IMR-90 (cell line): ENCODE measurements at regions of chr4 and their contacts with region 1.

Region 1: DNA sequence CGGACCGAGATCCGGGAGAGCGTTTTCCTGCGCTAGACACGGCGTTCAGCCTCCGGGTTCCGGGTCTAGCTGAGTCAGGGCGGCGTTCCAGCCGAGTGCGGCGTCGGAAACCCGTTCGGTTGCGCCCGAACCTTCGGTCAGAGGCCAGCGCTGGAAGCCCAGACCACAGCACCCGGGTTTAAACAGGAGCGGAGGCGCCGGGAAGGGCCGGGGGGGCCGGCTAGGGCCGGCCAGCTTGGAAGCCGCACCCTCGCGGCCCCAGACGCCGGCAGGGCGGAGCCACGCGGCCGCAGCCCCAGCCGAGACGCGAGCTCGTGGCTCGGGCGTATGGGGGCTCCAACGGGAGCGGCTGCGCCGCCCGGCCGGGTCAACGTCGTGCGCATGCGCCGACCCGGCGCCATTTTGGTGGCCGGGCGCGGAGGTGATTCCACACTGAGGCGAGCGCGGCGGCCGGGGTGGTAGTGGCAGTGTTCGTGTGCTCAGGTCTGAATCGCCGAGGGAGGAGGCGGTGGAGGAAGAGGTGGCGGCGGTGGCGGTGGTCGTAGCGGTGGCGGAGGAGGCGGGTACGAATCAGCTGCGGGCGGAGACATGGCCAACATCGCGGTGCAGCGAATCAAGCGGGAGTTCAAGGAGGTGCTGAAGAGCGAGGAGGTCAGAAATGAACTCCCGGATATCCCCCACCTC is at the start of gene UBE2K:
- DNase-seq: peak; percentile 82
- ATAC-seq: peak; percentile 98
- H3K4me3 ChIP-seq: peak within 1 kb of the TSS; percentile 90
- H3K27ac ChIP-seq: peak within 1 kb of the TSS; percentile 97
- H3K4me1 ChIP-seq: peaks cover 5% of the 10 kb centered on the region
- H3K27me3 ChIP-seq: no peaks in the 10 kb centered on the region
- CTCF ChIP-seq: no peak
- POLR2A ChIP-seq: peak; percentile 67; the same call in 1 of the 2 replicates
- RAD21 ChIP-seq: no peak
- total RNA-seq, gene UBE2K: 17.7 and 24.4 TPM in 2 replicates

Region 2: DNA sequence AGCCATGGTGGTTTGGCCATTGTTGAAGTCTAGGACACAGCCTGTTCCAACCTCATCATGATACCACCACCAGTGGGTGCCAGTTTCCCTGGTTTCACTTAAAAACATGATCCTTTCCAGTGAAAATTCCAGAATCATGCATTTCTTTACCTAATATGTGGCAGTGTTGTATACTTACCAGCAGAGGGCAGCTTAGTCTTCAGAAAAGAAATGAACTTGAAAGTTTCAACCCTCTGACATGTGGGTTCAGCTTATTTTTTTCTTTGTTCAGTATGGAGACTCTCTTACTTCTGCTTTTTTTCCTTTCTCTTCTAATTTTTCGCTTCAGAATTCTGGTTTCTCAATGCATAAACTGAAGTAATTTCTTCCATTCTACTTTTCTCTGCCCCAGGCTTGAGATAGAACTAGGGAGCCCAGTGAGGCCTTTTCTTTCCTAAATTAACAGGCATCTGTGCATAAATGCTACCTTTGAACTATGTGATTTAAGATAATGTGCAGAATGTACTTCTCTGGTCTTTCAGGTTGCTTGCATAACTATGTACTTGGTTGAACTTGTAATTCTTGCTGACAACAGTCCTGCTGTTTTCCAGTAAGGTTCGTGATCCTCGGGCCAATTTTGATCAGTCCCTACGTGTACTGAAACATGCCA is 228.3 kb before region 1 on chr4:
- CTCF ChIA-PET with region 1: no interaction called
- POLR2A ChIA-PET with region 1: no interaction called
- dilution Hi-C with region 1: no loop called
- in situ Hi-C with region 1: no loop called
- intact Hi-C with region 1: loop called (anchors 2 kb)
- DNase-seq: peak; percentile 87
- ATAC-seq: peak; percentile 83
- H3K4me3 ChIP-seq: no peak overlapping the region
- H3K27ac ChIP-seq: no peak overlapping the region
- H3K4me1 ChIP-seq: no peaks in the 10 kb centered on the region
- H3K27me3 ChIP-seq: no peaks in the 10 kb centered on the region
- CTCF ChIP-seq: peak; percentile 97
- POLR2A ChIP-seq: no peak
- RAD21 ChIP-seq: peak; percentile 87

Region 3: GRCh38 chr4:39638354-39639240 is 59.3 kb before region 1 on chr4 and contains the start of gene SMIM14:
- CTCF ChIA-PET with region 1: no interaction called
- POLR2A ChIA-PET with region 1: interaction called, 7 read pairs
- dilution Hi-C with region 1: no loop called
- in situ Hi-C with region 1: no loop called
- intact Hi-C with region 1: loop called (anchors 1 kb)
- DNase-seq: peak; percentile 98
- ATAC-seq: peak; percentile 96
- H3K4me3 ChIP-seq: peak within 1 kb of the TSS; percentile 87
- H3K27ac ChIP-seq: peak within 1 kb of the TSS; percentile 88
- H3K4me1 ChIP-seq: no peaks in the 10 kb centered on the region; the same call in 1 of the 2 replicates
- H3K27me3 ChIP-seq: no peaks in the 10 kb centered on the region
- CTCF ChIP-seq: no peak
- POLR2A ChIP-seq: peak; percentile 98
- RAD21 ChIP-seq: peak; percentile 26; the same call in 1 of the 2 replicates
- total RNA-seq, gene SMIM14: 15.6 and 30.8 TPM in 2 replicates

Region 4: DNA sequence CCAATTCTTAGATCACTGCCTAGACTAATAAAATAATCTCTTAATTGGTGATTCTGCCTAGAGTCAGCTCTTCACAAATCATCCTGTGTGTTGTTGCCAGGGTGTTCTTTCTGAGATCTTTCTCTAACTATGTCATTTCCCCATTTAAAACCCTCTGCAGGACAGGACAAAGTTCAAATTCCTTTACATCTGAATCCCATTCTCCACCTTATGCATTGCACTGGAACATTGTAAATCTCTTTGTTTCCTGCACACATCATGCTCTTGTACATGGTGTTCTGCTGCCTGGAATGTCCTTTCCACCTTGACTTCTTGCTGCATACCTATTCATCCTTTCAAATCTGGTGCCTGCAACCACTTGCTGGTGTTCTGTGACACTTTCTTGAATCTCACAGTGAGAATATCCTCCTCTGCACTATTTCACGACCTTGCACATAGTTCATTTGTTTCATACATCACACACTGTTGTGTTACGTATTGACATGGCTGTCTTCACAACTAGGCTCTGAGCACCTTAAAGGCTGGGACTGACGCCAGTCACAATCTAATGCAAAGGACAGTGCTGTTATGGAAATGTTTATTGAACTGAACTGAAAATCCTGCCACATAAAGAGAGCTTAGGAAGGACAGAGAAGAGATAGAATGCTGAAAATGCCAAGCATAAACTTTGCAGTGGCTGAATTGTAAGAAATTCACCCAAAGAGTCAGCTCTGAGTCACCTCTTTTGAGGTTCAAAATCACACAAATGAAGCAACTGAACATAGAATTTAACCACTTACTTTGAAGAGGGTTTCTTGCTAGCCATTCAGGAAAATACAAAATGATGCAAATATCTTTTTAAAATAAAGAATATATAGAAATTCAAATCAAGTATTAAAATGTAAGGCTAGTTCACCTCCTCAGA is 32.8 kb before region 1 on chr4:
- CTCF ChIA-PET with region 1: no interaction called
- POLR2A ChIA-PET with region 1: no interaction called
- dilution Hi-C with region 1: no loop called
- in situ Hi-C with region 1: no loop called
- intact Hi-C with region 1: no loop called
- DNase-seq: peak; percentile 75
- ATAC-seq: peak; percentile 93
- H3K4me3 ChIP-seq: no peak overlapping the region
- H3K27ac ChIP-seq: peak overlapping the region; percentile 46; the same call in 1 of the 2 replicates
- H3K4me1 ChIP-seq: peaks cover 4% of the 10 kb centered on the region
- H3K27me3 ChIP-seq: no peaks in the 10 kb centered on the region
- CTCF ChIP-seq: no peak
- POLR2A ChIP-seq: no peak
- RAD21 ChIP-seq: no peak

Region 5: GRCh38 chr4:39950861-39951481 is 253.1 kb after region 1 on chr4:
- CTCF ChIA-PET with region 1: no interaction called
- POLR2A ChIA-PET with region 1: interaction called, 13 read pairs
- dilution Hi-C with region 1: no loop called
- in situ Hi-C with region 1: no loop called
- intact Hi-C with region 1: no loop called
- DNase-seq: peak; percentile 19
- ATAC-seq: peak; percentile 69
- H3K4me3 ChIP-seq: no peak overlapping the region
- H3K27ac ChIP-seq: no peak overlapping the region
- H3K4me1 ChIP-seq: peaks cover 5% of the 10 kb centered on the region
- H3K27me3 ChIP-seq: no peaks in the 10 kb centered on the region
- CTCF ChIP-seq: no peak
- POLR2A ChIP-seq: no peak
- RAD21 ChIP-seq: no peak

Region 6: GRCh38 chr4:40056716-40057585 is 359.1 kb after region 1 on chr4 and contains the start of gene N4BP2:
- CTCF ChIA-PET with region 1: no interaction called
- POLR2A ChIA-PET with region 1: no interaction called
- dilution Hi-C with region 1: no loop called
- in situ Hi-C with region 1: no loop called
- intact Hi-C with region 1: loop called (anchors 10 kb)
- DNase-seq: peak; percentile 68
- ATAC-seq: peak; percentile 70
- H3K4me3 ChIP-seq: peak within 1 kb of the TSS; percentile 76
- H3K27ac ChIP-seq: peak within 1 kb of the TSS; percentile 93
- H3K4me1 ChIP-seq: no peaks in the 10 kb centered on the region
- H3K27me3 ChIP-seq: no peaks in the 10 kb centered on the region
- CTCF ChIP-seq: peak; percentile 91
- POLR2A ChIP-seq: peak; percentile 80
- RAD21 ChIP-seq: peak; percentile 72
- total RNA-seq, gene N4BP2: 2.2 and 4.2 TPM in 2 replicates